B cell (primary cell): ENCODE measurements at regions of chr1 and their contacts with region 1.

Region 1: GRCh38 chr1:180027949-180028445 is 73.4 kb downstream of the CEP350 start:
- DNase-seq: no peak
- ATAC-seq: no peak
- H3K4me3 ChIP-seq: no peak overlapping the region
- H3K4me3 Mint-ChIP-seq: no peak overlapping the region
- H3K27ac ChIP-seq: no peak overlapping the region
- H3K27ac Mint-ChIP-seq: no peak overlapping the region
- H3K4me1 ChIP-seq: no peaks in the 10 kb centered on the region
- H3K4me1 Mint-ChIP-seq: no peaks in the 10 kb centered on the region
- H3K27me3 ChIP-seq: no peaks in the 10 kb centered on the region
- H3K27me3 Mint-ChIP-seq: no peaks in the 10 kb centered on the region
- CTCF ChIP-seq: no peak

Region 2: GRCh38 chr1:179867807-179868330 is 160.1 kb before region 1 on chr1:
- CTCF ChIA-PET with region 1: interaction called, 8 read pairs
- POLR2A ChIA-PET with region 1: no interaction called
- intact Hi-C with region 1: loop called (anchors 1 kb)
- DNase-seq: peak; percentile 69
- ATAC-seq: peak; percentile 71
- H3K4me3 ChIP-seq: no peak overlapping the region
- H3K4me3 Mint-ChIP-seq: no peak overlapping the region
- H3K27ac ChIP-seq: no peak overlapping the region
- H3K27ac Mint-ChIP-seq: peak overlapping the region; percentile 3
- H3K4me1 ChIP-seq: peaks cover 5 to 6% of the 10 kb centered on the region in 2 donors
- H3K4me1 Mint-ChIP-seq: peaks cover 21% of the 10 kb centered on the region
- H3K27me3 ChIP-seq: no peaks in the 10 kb centered on the region
- H3K27me3 Mint-ChIP-seq: no peaks in the 10 kb centered on the region
- CTCF ChIP-seq: peak; percentile 80

Region 3: GRCh38 chr1:180070286-180070685 is 42.3 kb after region 1 on chr1:
- CTCF ChIA-PET with region 1: no interaction called
- POLR2A ChIA-PET with region 1: no interaction called
- intact Hi-C with region 1: loop called (anchors 10 kb)
- DNase-seq: no peak
- ATAC-seq: no peak
- H3K4me3 ChIP-seq: no peak overlapping the region
- H3K4me3 Mint-ChIP-seq: no peak overlapping the region
- H3K27ac ChIP-seq: no peak overlapping the region
- H3K27ac Mint-ChIP-seq: no peak overlapping the region
- H3K4me1 ChIP-seq: no peaks in the 10 kb centered on the region
- H3K4me1 Mint-ChIP-seq: no peaks in the 10 kb centered on the region
- H3K27me3 ChIP-seq: no peaks in the 10 kb centered on the region
- H3K27me3 Mint-ChIP-seq: no peaks in the 10 kb centered on the region
- CTCF ChIP-seq: no peak